Calu3 (cell line): ENCODE measurements at regions of chr6 and their contacts with region 1.

Region 1: DNA sequence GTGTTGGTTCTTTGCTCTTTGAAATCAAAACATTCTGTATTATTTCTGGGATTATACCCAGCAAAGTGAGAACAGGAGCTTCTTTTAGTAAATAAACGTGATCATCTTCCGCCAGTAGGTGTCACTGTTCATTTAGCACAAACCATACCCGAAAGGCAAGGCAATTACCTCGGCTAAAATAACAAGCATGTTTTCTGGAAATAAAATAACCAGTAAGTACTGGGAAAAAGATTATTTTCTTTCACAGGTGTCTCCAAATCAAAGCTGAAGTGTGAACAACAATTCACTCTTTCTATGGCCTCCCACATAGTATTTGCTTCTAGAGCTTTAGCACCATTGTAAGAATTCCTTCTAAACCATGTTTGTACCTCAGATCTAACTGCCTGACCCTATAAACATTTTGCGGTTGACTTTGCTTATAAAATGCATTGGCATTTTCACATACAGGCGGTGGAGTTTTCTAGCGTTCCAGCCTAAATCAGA is 144.6 kb upstream of the AGPAT4 start:
- DNase-seq: peak; percentile 63
- H3K4me3 Mint-ChIP-seq: no peak overlapping the region
- H3K27ac Mint-ChIP-seq: no peak overlapping the region
- H3K4me1 Mint-ChIP-seq: no peaks in the 10 kb centered on the region
- H3K27me3 Mint-ChIP-seq: no peaks in the 10 kb centered on the region
- CTCF ChIP-seq: peak; percentile 41

Region 2: GRCh38 chr6:161301338-161301737 is 117.2 kb before region 1 on chr6:
- CTCF ChIA-PET with region 1: no interaction called
- intact Hi-C with region 1: no loop called
- DNase-seq: no peak
- H3K4me3 Mint-ChIP-seq: no peak overlapping the region
- H3K27ac Mint-ChIP-seq: no peak overlapping the region
- H3K4me1 Mint-ChIP-seq: peaks cover 21% of the 10 kb centered on the region
- H3K27me3 Mint-ChIP-seq: no peaks in the 10 kb centered on the region
- CTCF ChIP-seq: no peak

Region 3: GRCh38 chr6:161393839-161394364 is 24.6 kb before region 1 on chr6:
- CTCF ChIA-PET with region 1: interaction called, 5 read pairs
- intact Hi-C with region 1: loop called (anchors 2 kb)
- DNase-seq: peak; percentile 55
- H3K4me3 Mint-ChIP-seq: no peak overlapping the region
- H3K27ac Mint-ChIP-seq: no peak overlapping the region
- H3K4me1 Mint-ChIP-seq: no peaks in the 10 kb centered on the region
- H3K27me3 Mint-ChIP-seq: peaks cover 12% of the 10 kb centered on the region
- CTCF ChIP-seq: peak; percentile 62

Region 4: DNA sequence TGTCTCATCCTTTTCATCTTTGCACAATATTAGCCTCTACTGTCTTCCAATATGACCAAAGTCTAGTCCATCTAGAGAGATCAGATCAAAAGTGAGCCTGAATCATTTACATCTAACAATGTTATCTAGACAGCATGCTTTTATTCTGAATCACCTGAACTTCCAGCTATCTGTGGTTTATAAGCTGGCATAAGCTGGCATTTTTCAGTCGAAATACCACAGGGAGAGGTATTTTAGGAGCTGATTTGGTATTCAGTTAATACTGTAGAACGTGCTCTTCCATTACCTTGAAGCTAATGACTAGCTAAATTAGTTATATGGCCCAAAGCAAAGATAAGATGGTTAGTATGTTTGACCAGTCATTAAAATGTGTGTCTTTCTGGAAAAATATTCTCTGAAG is 43.6 kb after region 1 on chr6:
- CTCF ChIA-PET with region 1: interaction called, 11 read pairs
- intact Hi-C with region 1: no loop called
- DNase-seq: no peak
- H3K4me3 Mint-ChIP-seq: no peak overlapping the region
- H3K27ac Mint-ChIP-seq: no peak overlapping the region
- H3K4me1 Mint-ChIP-seq: peaks cover 13% of the 10 kb centered on the region
- H3K27me3 Mint-ChIP-seq: no peaks in the 10 kb centered on the region
- CTCF ChIP-seq: no peak

Region 5: GRCh38 chr6:161498359-161498758 is 79.9 kb after region 1 on chr6:
- CTCF ChIA-PET with region 1: interaction called, 44 read pairs
- intact Hi-C with region 1: loop called (anchors 1 kb)
- DNase-seq: peak; percentile 74
- H3K4me3 Mint-ChIP-seq: no peak overlapping the region
- H3K27ac Mint-ChIP-seq: peak overlapping the region; percentile 37
- H3K4me1 Mint-ChIP-seq: peaks cover 16% of the 10 kb centered on the region
- H3K27me3 Mint-ChIP-seq: peaks cover 13% of the 10 kb centered on the region
- CTCF ChIP-seq: peak; percentile 66

Region 6: GRCh38 chr6:161694995-161695394 is 276.5 kb after region 1 on chr6:
- CTCF ChIA-PET with region 1: interaction called, 11 read pairs
- intact Hi-C with region 1: loop called (anchors 1 kb)
- DNase-seq: peak; percentile 17
- H3K4me3 Mint-ChIP-seq: no peak overlapping the region
- H3K27ac Mint-ChIP-seq: no peak overlapping the region
- H3K4me1 Mint-ChIP-seq: no peaks in the 10 kb centered on the region
- H3K27me3 Mint-ChIP-seq: no peaks in the 10 kb centered on the region
- CTCF ChIP-seq: no peak